Aorta (tissue), 5 donors: ENCODE measurements at regions of chr14 and their contacts with region 1.

Region 1: DNA sequence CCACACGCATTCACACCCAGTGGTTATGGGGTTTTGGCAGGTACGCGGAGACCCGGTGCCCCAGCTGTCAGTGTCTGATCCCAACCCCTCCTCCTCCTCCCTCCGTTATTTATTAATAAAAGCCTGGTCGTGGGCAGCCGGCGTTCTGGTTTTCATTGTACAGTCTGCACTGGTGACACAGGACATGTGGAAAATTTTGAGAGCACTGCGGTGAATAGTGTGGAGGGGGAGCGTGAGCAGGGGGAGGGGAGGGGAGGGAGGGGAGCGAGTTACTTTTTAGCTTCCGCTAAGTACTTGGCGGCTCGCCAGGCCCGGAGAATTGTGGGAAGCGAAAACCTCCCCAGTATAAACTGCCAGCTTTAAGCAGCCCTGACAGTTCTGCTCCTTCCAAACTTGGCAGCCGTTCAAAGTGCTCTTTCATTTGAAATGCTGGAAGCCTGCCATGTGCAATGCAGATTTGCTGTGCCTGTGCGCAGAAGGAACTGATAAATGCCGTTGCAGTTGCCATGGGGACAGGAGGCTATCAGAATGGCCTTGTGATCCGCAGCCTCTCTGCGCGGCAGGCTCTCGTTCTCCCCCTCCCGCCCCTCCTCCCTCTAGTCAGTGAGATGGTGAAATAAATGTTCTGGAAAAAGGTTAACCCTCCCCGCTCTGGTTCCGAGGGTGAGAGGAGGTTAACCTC is 11.7 kb upstream of the IRF2BPL start:
- DNase-seq: peak; percentile 100
- ATAC-seq: peak; percentile 90
- H3K4me3 ChIP-seq: peak overlapping the region in 1 of 2 donors; percentile 32
- H3K27ac ChIP-seq: peak overlapping the region; percentile 38 to 94
- H3K4me1 ChIP-seq: peaks cover 8 to 11% of the 10 kb centered on the region in 2 donors
- H3K27me3 ChIP-seq: no peaks in the 10 kb centered on the region

Region 2: GRCh38 chr14:77007975-77008421 is 32.2 kb before region 1 on chr14:
- intact Hi-C with region 1: loop called in 1 of 2 experiments (anchors 5 kb)
- DNase-seq: peak; percentile 85 to 86
- ATAC-seq: peak; percentile 85
- H3K4me3 ChIP-seq: no peak overlapping the region
- H3K27ac ChIP-seq: peak overlapping the region; percentile 29 to 68
- H3K4me1 ChIP-seq: no peaks in the 10 kb centered on the region
- H3K27me3 ChIP-seq: no peaks in the 10 kb centered on the region

Region 3: GRCh38 chr14:77022236-77022852 is 17.9 kb before region 1 on chr14:
- intact Hi-C with region 1: no loop called
- DNase-seq: no peak
- ATAC-seq: no peak
- H3K4me3 ChIP-seq: no peak overlapping the region
- H3K27ac ChIP-seq: no peak overlapping the region
- H3K4me1 ChIP-seq: no peaks in the 10 kb centered on the region
- H3K27me3 ChIP-seq: no peaks in the 10 kb centered on the region

Region 4: DNA sequence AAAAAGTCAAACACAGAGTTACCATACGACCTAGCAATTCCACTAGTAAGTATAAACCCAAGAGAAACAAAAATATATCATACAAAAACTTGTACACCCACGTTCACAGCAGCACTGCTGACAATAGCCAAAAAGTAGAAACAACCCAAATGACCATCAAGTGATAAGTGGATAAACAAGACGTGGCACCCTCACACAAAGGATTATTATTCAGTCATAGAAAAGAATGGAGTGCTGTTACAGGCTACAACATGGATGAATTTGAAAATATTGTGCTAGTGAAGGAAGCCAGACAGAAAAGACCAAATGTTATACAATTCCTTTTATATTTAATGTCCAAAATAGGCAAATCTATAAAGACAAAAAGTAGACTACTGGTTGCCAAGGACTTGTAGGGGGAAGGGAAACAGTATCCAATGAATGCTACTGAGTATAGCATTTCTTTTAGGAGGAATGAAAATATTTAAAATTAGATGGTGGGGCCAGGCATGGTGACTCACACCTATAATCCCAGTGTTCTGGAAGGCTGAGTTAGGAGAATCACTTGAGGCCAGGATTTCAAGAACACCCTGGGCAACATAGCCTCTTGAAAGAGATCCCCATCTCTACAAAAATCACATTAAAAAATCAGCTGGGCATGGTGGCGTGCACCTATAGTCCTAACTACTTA is 534.4 kb after region 1 on chr14:
- intact Hi-C with region 1: no loop called
- DNase-seq: no peak
- ATAC-seq: no peak
- H3K4me3 ChIP-seq: no peak overlapping the region
- H3K27ac ChIP-seq: no peak overlapping the region
- H3K4me1 ChIP-seq: peaks cover 0 to 2% of the 10 kb centered on the region in 2 donors
- H3K27me3 ChIP-seq: no peaks in the 10 kb centered on the region